H1 (cell line): ENCODE measurements at regions of chr17 and their contacts with region 1.

Region 1: DNA sequence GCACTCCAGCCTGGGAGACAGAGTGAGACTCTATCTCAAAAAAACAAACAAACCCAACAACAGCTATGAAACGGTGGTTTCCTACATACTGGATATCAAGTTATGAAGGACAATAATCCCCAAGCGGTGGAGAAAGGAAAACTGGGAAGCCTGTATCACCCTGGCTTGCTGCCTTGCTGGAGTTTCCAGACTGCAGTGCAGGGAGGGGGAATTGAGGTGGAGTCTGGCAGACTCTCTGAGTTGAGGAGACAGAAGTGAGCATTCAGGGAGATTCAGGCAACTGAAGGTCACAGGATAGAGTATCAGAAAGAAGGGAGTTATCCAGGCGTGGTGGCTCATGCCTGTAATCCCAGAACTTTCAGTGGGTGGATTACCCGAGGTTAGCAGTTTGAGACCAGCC is 11.9 kb downstream of the QRICH2 start:
- DNase-seq: no peak
- H3K4me3 ChIP-seq: no peak overlapping the region
- H3K27ac ChIP-seq: no peak overlapping the region
- H3K4me1 ChIP-seq: no peaks in the 10 kb centered on the region
- H3K27me3 ChIP-seq: no peaks in the 10 kb centered on the region
- CTCF ChIP-seq: no peak
- EP300 ChIP-seq: no peak
- POLR2A ChIP-seq: no peak
- RAD21 ChIP-seq: no peak

Region 2: DNA sequence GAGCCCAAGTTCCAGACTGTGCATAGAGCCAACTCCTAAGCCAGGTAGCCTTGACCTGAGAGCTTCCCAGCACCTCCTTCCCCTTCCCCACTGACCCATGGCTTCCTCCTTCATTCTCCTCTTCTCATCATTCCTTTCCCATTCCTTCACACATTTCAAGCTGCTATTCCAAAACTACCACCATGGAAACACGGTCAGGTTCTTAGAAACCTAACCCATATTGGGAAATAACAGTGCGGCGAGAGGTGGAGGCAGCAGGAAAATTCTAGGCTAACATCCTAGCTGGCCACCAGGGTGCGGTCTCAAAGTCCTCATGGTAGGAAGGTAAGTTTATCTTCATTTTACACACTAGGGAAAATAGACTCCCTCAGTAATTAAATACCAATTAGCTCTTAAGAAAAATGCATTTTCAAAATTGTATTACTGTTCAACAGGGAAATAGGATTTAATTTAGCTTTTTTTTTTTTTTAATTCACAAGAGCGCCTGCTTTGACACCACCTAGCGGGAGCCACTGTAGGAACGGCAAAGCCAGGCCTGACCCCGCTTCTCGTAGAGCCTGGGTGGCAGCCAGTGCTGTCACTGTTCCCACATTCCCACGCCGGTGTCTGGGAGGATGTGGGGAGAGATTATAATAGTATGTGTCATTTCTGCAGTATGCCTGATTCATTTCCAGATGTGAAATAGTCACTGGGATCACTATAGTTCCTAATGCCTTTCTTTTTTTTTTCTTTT is 74.2 kb after region 1 on chr17:
- CTCF ChIA-PET with region 1: interaction called, 10 read pairs
- POLR2A ChIA-PET with region 1: no interaction called
- DNase-seq: no peak
- H3K4me3 ChIP-seq: no peak overlapping the region
- H3K27ac ChIP-seq: no peak overlapping the region
- H3K4me1 ChIP-seq: peaks cover 0 to 4% (median 3%) of the 10 kb centered on the region in 4 experiments; a peak in 3 of 7 replicates
- H3K27me3 ChIP-seq: no peaks in the 10 kb centered on the region
- CTCF ChIP-seq: peak; percentile 33 to 45 (median 36); a peak in 3 of 4 replicates
- EP300 ChIP-seq: no peak
- POLR2A ChIP-seq: no peak
- RAD21 ChIP-seq: peak; percentile 2 to 4; a peak in 1 of 4 replicates